Esophagus squamous epithelium (tissue), 5 donors: ENCODE measurements at regions of chr5 and their contacts with region 1.

Region 1: GRCh38 chr5:146965761-146966659 is 87.5 kb upstream of the PPP2R2B start:
- DNase-seq: no peak
- H3K4me3 ChIP-seq: no peak overlapping the region
- H3K27ac ChIP-seq: no peak overlapping the region
- H3K4me1 ChIP-seq: peaks cover 0 to 7% (median 0%) of the 10 kb centered on the region in 3 donors
- H3K27me3 ChIP-seq: no peaks in the 10 kb centered on the region
- CTCF ChIP-seq: peak; percentile 66 to 95 (median 91)
- POLR2A ChIP-seq: no peak

Region 2: DNA sequence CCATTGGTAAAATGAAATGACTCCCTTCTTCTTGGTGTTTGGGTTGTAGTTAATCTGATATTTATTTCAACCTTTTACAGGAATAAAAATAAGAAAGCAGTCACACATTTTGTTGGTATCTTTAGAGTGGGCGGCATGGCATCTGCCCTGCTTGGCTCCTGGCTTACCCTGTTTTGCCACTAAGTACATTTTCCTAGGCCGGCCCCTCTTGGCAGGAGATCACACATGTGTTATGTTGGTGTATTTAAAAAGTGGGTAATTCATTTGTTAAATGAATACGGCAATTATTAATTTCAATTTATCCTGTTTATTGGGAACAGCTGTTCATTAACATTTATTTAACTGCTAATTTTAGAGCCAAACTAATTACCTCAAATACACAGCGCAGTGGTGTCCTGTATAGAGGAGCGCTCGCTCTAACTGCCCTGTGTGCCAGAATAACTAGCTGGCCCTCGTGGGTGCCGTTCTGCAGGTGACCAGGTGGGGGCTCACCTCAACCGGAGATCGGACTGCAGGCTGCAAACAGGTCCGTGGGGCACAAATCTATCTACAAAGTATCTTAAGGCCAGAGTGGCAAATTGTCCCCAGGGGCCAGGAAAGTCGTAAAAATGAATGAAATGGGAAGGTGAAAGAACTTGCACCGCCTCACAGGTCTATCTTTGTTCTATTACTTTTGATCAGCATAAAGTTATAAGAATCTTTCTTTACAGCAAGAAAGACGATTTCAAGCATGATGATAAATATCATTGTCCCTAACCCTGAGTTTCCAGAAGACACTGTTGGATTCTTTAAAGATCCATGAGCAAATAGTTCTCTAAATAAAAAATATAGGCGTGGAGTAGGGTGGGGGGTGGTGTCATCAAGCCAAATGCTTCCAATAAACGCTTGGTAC is 423.8 kb before region 1 on chr5:
- intact Hi-C with region 1: loop called (anchors 5 kb)
- DNase-seq: no peak
- H3K4me3 ChIP-seq: no peak overlapping the region
- H3K27ac ChIP-seq: no peak overlapping the region
- H3K4me1 ChIP-seq: peaks cover 0 to 17% (median 0%) of the 10 kb centered on the region in 3 donors
- H3K27me3 ChIP-seq: peaks cover 0 to 43% (median 0%) of the 10 kb centered on the region in 4 donors
- CTCF ChIP-seq: peak; percentile 51 to 91 (median 80)
- POLR2A ChIP-seq: no peak

Region 3: GRCh38 chr5:146656701-146657100 is 309.3 kb before region 1 on chr5:
- intact Hi-C with region 1: loop called (anchors 5 kb)
- DNase-seq: no peak
- H3K4me3 ChIP-seq: no peak overlapping the region
- H3K27ac ChIP-seq: no peak overlapping the region
- H3K4me1 ChIP-seq: no peaks in the 10 kb centered on the region
- H3K27me3 ChIP-seq: no peaks in the 10 kb centered on the region
- CTCF ChIP-seq: no peak
- POLR2A ChIP-seq: no peak

Region 4: GRCh38 chr5:147140558-147140957 is 174.5 kb after region 1 on chr5:
- intact Hi-C with region 1: no loop called
- DNase-seq: no peak
- H3K4me3 ChIP-seq: no peak overlapping the region
- H3K27ac ChIP-seq: no peak overlapping the region
- H3K4me1 ChIP-seq: no peaks in the 10 kb centered on the region
- H3K27me3 ChIP-seq: no peaks in the 10 kb centered on the region
- CTCF ChIP-seq: no peak
- POLR2A ChIP-seq: no peak